Vagina (tissue), 2 donors: ENCODE measurements at regions of chr1 and their contacts with region 1.

Region 1: GRCh38 chr1:92298573-92299476 is at the starts of genes GLMN and RPAP2:
- DNase-seq: no peak
- H3K4me3 ChIP-seq: peak within 1 kb of the TSS; percentile 77 to 88
- H3K27ac ChIP-seq: peak within 1 kb of the TSS; percentile 86
- H3K4me1 ChIP-seq: peaks cover 23% of the 10 kb centered on the region
- H3K27me3 ChIP-seq: no peaks in the 10 kb centered on the region
- CTCF ChIP-seq: no peak
- POLR2A ChIP-seq: peak; percentile 41 to 81
- total RNA-seq, gene GLMN: 9.3 TPM
- total RNA-seq, gene RPAP2: 11.8 TPM

Region 2: GRCh38 chr1:92184632-92185031 is 114.2 kb before region 1 on chr1:
- intact Hi-C with region 1: loop called (anchors 5 kb)
- DNase-seq: no peak
- H3K4me3 ChIP-seq: no peak overlapping the region
- H3K27ac ChIP-seq: no peak overlapping the region
- H3K4me1 ChIP-seq: no peaks in the 10 kb centered on the region
- H3K27me3 ChIP-seq: no peaks in the 10 kb centered on the region
- CTCF ChIP-seq: no peak
- POLR2A ChIP-seq: no peak

Region 3: GRCh38 chr1:93597709-93598108 is 1298.9 kb after region 1 on chr1:
- intact Hi-C with region 1: loop called (anchors 5 kb)
- DNase-seq: no peak
- H3K4me3 ChIP-seq: no peak overlapping the region
- H3K27ac ChIP-seq: no peak overlapping the region
- H3K4me1 ChIP-seq: peaks cover 71% of the 10 kb centered on the region
- H3K27me3 ChIP-seq: no peaks in the 10 kb centered on the region
- CTCF ChIP-seq: no peak
- POLR2A ChIP-seq: no peak